ENCODE measurements at regions of chr5 and their contacts with region 1.

Region 1: DNA sequence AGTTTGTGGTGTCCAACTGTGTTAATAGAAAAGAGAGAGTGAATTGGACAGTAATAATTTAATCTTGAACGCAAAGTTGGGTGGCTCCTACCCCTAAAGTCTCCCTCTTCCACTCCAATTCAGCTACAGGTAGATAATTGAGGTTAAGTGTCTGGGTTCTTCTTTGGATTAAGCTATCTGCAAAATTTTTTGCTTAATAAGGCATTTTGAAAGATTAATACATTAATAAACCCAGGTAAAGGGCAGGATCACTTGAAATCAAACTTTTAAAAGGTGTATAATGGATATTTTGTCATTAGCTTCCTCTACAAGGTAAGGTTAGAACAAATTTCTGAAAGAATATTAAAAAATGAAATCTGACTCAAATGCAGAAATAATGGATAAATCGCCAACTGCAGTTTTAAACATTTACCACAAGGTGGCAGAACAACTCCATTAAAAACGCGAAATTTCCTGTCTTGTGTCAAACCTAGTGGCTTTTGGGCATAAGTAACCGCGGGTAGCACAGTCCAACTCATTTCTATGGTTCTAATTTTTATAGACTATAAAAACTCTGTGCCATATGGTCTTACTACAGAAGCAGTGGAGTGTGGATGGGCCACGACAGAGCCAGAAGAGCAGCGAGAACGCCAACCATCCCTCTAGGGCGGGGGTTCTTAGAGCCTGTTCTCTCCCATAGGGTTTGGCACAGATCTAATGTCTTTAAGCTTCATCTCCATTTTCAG is 276.5 kb downstream of the ARHGEF28 start:
- DNase-seq: peak; percentile 12
- H3K4me3 ChIP-seq: no peak overlapping the region
- H3K27ac ChIP-seq: no peak overlapping the region
- H3K27me3 ChIP-seq: no peaks in the 10 kb centered on the region
- CTCF ChIP-seq: peak; percentile 53

Region 2: DNA sequence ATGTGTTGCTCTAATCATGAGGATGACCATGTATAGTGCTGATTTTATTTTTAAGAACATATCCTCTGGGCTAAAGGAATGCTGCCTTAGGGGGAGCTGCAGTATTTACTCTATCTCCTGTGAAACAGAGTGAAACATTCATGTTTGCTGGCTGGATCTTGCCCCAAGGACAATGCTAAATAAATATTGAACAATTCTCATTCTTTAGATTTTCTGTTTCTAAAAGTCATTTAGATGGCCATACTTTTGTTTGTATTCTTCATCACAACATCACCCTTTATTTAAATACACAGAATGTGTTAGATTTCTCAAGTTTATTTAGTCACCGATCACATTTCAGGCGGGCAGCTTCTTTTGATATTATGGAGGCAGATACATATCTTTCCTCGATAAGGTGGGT is 173.2 kb before region 1 on chr5:
- in situ Hi-C with region 1: no loop called
- DNase-seq: no peak
- H3K4me3 ChIP-seq: no peak overlapping the region
- H3K27ac ChIP-seq: no peak overlapping the region
- H3K27me3 ChIP-seq: no peaks in the 10 kb centered on the region
- CTCF ChIP-seq: no peak

Region 3: DNA sequence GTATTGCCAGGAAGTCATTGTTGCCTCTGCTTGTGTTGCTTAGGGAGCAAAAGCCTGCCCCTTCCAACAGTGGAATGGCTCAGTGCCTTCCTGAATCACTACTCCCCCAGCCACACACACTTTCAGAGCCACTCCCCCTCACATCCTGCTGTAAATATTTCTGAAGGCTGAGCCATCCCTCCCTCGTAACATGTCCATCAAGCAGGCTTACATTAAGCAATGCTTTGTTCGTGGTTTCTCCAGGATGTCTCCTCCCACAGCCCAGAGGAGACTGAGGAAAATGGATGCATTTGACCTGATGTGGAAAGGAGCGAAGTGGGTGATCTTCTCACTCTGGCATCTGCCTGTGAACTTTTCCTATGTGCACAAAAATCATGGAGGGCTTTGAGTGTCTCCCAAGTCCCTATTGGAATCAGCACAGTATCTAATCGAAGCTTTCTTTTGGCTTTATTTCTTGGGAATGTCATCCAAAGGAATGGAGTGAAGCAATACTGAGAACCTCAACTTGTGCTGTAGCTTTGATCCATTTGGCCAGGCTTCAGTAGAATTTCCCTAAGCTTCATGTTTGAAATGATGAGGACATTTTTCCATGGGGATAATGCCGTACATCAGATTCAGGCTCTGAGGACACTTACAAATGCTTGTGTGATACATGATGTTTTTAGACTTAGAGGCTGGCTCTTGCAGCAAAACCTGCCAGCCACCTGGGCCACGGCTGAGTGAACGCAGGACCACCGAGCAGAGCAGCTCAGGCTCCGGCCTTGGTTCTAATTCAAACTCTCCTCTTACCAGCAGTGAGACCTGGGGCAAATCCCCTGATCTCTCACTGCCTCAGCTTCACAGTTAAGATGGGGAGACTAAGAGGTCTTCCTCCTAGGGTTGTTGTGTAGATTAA is 348.9 kb after region 1 on chr5:
- in situ Hi-C with region 1: no loop called
- DNase-seq: peak; percentile 96
- H3K4me3 ChIP-seq: no peak overlapping the region
- H3K27ac ChIP-seq: peak overlapping the region; percentile 58
- H3K27me3 ChIP-seq: no peaks in the 10 kb centered on the region
- CTCF ChIP-seq: no peak

Region 4: DNA sequence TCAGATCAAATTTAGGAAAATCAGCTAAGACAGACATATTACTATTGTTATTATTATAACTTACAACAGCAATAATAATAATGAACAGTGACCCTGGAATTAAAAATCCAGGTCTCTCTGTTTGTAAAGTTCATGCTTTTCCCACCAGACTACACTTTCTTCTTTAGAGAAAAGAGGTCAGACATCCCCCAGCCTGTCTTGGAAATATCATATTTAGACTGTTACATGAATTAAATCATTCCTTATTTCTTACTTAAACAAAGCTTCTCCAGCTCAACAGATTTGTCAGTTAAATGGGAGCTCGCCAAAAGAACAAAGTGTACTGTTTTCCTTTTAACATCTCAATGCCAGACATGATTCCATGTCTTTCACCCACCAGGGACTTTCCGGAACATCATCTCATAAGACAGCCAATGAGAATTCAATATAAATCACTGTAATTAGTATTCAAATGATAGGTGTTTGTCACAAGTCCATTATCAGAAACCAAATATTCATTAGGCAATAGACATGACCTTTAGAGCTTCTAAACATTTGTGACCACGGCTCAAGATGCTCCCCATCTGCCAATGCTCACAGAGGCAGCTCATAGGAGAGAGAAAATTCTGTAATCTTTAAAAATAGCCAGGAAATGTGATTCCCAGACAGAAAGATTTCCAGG is 386.1 kb after region 1 on chr5:
- in situ Hi-C with region 1: no loop called
- DNase-seq: peak; percentile 36
- H3K4me3 ChIP-seq: no peak overlapping the region
- H3K27ac ChIP-seq: no peak overlapping the region
- H3K27me3 ChIP-seq: no peaks in the 10 kb centered on the region
- CTCF ChIP-seq: no peak

Region 5: GRCh38 chr5:74673011-74673790 is 770.7 kb after region 1 on chr5:
- in situ Hi-C with region 1: loop called (anchors 25 kb)
- DNase-seq: no peak
- H3K4me3 ChIP-seq: peak overlapping the region; percentile 4
- H3K27ac ChIP-seq: no peak overlapping the region
- H3K27me3 ChIP-seq: no peaks in the 10 kb centered on the region
- CTCF ChIP-seq: peak; percentile 45